ENCODE measurements at regions of chr17 and their contacts with region 1.

Region 1: GRCh38 chr17:31997005-31997404 is 10.2 kb upstream of the LRRC37B start:
- DNase-seq: no peak
- ATAC-seq: no peak
- H3K4me3 ChIP-seq: no peak overlapping the region
- H3K27ac ChIP-seq: no peak overlapping the region
- H3K4me1 ChIP-seq: no peaks in the 10 kb centered on the region
- H3K27me3 ChIP-seq: no peaks in the 10 kb centered on the region
- CTCF ChIP-seq: no peak
- POLR2A ChIP-seq: no peak

Region 2: GRCh38 chr17:32335687-32336086 is 338.7 kb after region 1 on chr17:
- in situ Hi-C with region 1: loop called in 1 of 4 experiments (anchors 25 kb)
- intact Hi-C with region 1: loop called (anchors 10 kb)
- DNase-seq: no peak
- ATAC-seq: no peak
- H3K4me3 ChIP-seq: no peak overlapping the region
- H3K27ac ChIP-seq: no peak overlapping the region
- H3K4me1 ChIP-seq: no peaks in the 10 kb centered on the region
- H3K27me3 ChIP-seq: no peaks in the 10 kb centered on the region
- CTCF ChIP-seq: no peak
- POLR2A ChIP-seq: no peak

Measured in gastrocnemius medialis (tissue), 4 donors.